Mammary epithelial cell (primary cell): ENCODE measurements at regions of chr16 and their contacts with region 1.

Region 1: GRCh38 chr16:10616730-10617555 is 36.5 kb upstream of the EMP2 start:
- DNase-seq: peak; percentile 85
- H3K4me3 ChIP-seq: peak overlapping the region in 2 of 3 experiments; percentile 16 to 26
- H3K27ac ChIP-seq: peak overlapping the region; percentile 79
- H3K4me1 ChIP-seq: peaks cover 42% of the 10 kb centered on the region
- H3K27me3 ChIP-seq: no peaks in the 10 kb centered on the region
- CTCF ChIP-seq: peak; percentile 20 to 36

Region 2: GRCh38 chr16:10552998-10553491 is 63.9 kb before region 1 on chr16:
- CTCF ChIA-PET with region 1: no interaction called
- dilution Hi-C with region 1: no loop called
- in situ Hi-C with region 1: no loop called
- intact Hi-C with region 1: no loop called
- DNase-seq: no peak
- H3K4me3 ChIP-seq: no peak overlapping the region
- H3K27ac ChIP-seq: no peak overlapping the region
- H3K4me1 ChIP-seq: no peaks in the 10 kb centered on the region
- H3K27me3 ChIP-seq: no peaks in the 10 kb centered on the region
- CTCF ChIP-seq: no peak

Region 3: DNA sequence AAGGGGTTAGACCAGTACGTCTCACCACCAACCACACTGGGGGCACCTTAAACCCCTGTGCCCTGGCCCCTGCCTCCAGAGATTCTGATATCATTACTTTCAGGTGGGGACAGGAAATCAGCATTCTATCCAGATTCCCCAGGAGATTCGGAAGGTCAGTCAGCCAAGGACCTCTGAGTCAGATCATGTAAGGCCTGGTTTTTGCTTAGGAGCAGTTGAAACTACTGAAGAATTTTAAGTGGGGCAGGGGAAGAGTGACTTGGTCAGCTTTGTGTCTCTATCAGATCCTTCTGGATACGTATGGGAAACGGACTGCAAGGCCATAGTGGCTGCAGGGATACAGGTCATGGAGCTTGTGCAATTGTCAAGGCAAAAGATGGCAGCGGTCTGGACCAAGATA is 45.6 kb before region 1 on chr16:
- CTCF ChIA-PET with region 1: no interaction called
- dilution Hi-C with region 1: no loop called
- in situ Hi-C with region 1: no loop called
- intact Hi-C with region 1: no loop called
- DNase-seq: no peak
- H3K4me3 ChIP-seq: no peak overlapping the region
- H3K27ac ChIP-seq: no peak overlapping the region
- H3K4me1 ChIP-seq: no peaks in the 10 kb centered on the region
- H3K27me3 ChIP-seq: no peaks in the 10 kb centered on the region
- CTCF ChIP-seq: no peak

Region 4: DNA sequence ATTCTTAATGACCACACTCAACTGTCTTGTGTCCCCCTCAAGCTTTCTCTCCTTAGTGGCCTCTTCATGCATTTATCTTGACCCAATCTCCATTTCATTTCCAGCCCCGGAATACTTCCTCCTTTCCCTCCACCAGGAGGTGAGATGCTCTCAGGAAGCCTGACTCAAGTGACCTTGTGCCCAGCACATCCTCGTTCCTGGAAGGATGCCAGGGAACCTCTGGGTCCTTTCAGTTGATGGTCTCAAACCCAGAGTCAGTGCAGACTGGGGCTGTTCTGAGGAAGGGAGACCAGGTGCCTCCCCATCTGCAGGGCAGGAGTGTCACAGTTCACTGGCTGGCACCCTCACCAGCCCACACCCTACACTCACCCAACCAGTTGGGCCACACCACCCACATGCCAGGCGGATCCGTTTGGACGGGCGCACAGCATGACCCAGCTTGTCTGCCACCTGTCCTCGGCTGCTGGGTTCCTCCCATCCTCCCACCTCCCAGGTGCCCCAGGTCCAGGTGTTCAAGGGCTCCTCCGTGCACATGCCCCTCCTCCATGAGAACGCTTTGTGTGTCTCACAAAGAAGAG is 22.5 kb before region 1 on chr16:
- CTCF ChIA-PET with region 1: no interaction called
- dilution Hi-C with region 1: no loop called
- in situ Hi-C with region 1: no loop called
- intact Hi-C with region 1: loop called (anchors 2 kb)
- DNase-seq: peak; percentile 95
- H3K4me3 ChIP-seq: no peak overlapping the region
- H3K27ac ChIP-seq: no peak overlapping the region
- H3K4me1 ChIP-seq: peaks cover 12% of the 10 kb centered on the region
- H3K27me3 ChIP-seq: no peaks in the 10 kb centered on the region
- CTCF ChIP-seq: peak in 1 of 2 donors; percentile 22

Region 5: DNA sequence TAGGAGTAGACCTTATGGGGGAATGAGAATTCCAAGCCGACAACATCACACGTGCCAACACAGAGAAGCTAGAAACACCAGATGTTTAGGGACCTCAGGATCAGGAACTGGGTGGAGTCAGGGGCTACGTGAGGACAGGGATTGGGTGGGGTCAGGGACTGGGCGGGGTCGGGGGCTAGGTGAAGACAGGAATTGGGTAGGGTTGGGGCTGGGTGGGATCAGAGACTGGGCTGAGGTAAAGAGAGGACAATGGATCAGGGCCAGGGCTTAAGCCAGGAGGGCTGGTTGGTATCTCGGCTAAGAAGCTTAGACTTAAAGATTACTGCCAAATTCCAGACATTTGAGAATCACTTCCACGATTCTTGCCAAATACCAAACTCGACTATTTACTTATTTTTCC is 66.2 kb after region 1 on chr16:
- CTCF ChIA-PET with region 1: no interaction called
- dilution Hi-C with region 1: no loop called
- in situ Hi-C with region 1: no loop called
- intact Hi-C with region 1: no loop called
- DNase-seq: no peak
- H3K4me3 ChIP-seq: no peak overlapping the region
- H3K27ac ChIP-seq: no peak overlapping the region
- H3K4me1 ChIP-seq: no peaks in the 10 kb centered on the region
- H3K27me3 ChIP-seq: no peaks in the 10 kb centered on the region
- CTCF ChIP-seq: no peak